GM12878 (cell line): ENCODE measurements at regions of chr11 and their contacts with region 1.

Region 1: DNA sequence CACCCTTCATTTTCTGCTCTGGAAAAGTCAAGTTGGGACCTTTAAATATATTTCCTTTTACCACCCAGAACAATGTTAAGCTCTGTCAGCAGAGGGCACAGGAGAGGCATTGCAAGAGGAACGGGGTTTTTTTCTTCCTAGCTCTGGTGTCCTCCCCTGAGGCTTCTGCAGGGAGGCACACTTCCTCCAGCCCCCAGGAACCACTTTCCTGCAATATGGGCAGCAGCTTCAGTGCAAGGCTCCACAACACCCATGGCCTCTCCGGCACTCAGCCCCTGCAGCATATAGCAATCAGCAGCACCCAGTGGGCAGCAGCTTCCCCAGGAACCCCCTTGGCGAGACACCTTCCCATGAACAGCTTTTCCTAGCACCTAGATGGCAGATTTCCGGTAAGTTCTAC is 101.4 kb downstream of the SYT9 start:
- DNase-seq: peak; percentile 7
- ATAC-seq: peak; percentile 89
- H3K4me3 ChIP-seq: no peak overlapping the region
- H3K27ac ChIP-seq: no peak overlapping the region
- H3K4me1 ChIP-seq: no peaks in the 10 kb centered on the region
- H3K27me3 ChIP-seq: no peaks in the 10 kb centered on the region
- CTCF ChIP-seq: peak; percentile 57 to 75 (median 70)
- EP300 ChIP-seq: no peak
- POLR2A ChIP-seq: no peak
- RAD21 ChIP-seq: peak; percentile 84

Region 2: DNA sequence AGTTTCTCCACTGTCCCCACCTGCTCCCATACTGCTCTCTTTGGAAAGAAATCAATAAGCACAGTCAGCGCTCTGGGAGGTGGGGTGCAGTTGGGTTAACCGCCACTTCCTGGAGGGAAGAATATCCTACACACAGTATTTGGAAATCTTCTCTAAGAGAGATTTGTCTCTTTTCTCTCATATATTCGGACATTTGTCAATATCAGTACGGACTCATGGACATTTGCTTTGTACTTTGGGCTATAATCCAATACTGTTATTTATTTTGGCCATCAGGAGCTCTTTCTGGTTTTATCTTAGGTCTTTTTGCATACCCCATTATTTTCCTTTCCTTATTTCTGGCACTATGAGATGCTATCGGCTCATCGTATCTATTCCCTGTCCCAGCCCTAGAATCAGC is 319.1 kb before region 1 on chr11:
- CTCF ChIA-PET with region 1: no interaction called
- POLR2A ChIA-PET with region 1: no interaction called
- RAD21 ChIA-PET with region 1: no interaction called
- SMC1A ChIA-PET with region 1: no interaction called
- in situ Hi-C with region 1: no loop called
- intact Hi-C with region 1: no loop called
- DNase-seq: no peak
- ATAC-seq: no peak
- H3K4me3 ChIP-seq: no peak overlapping the region
- H3K27ac ChIP-seq: no peak overlapping the region
- H3K4me1 ChIP-seq: no peaks in the 10 kb centered on the region
- H3K27me3 ChIP-seq: no peaks in the 10 kb centered on the region; a peak in 1 of 4 replicates
- CTCF ChIP-seq: no peak
- EP300 ChIP-seq: no peak
- POLR2A ChIP-seq: no peak
- RAD21 ChIP-seq: no peak

Region 3: DNA sequence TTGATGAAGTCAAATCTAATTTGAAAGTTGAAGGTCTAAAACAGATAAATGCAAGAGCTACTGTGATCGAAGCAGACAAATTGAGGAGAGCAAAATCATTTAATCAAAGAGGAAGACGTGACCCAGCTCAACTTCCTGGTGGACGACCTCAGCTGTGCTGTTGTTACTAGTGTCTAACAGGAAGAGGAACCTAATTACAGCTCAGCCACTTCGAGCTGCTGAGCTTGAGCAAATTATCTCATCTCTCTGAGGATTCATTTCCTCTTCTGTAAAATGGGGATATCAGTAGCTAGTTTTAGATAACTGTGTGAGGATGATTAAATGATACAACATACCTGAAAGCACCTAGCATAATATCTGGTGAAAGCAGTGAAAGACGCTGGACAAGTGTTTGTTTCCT is 83.6 kb after region 1 on chr11:
- CTCF ChIA-PET with region 1: interaction called, 107 read pairs
- POLR2A ChIA-PET with region 1: no interaction called
- RAD21 ChIA-PET with region 1: interaction called, 74 read pairs
- SMC1A ChIA-PET with region 1: interaction called, 119 read pairs
- in situ Hi-C with region 1: loop called (anchors 5 kb)
- intact Hi-C with region 1: no loop called
- DNase-seq: no peak
- ATAC-seq: peak; percentile 89
- H3K4me3 ChIP-seq: no peak overlapping the region
- H3K27ac ChIP-seq: no peak overlapping the region
- H3K4me1 ChIP-seq: 0 out of 2 replicates have a peak, but pooled peaks cover 5% of the 10 kb centered on the region
- H3K27me3 ChIP-seq: no peaks in the 10 kb centered on the region
- CTCF ChIP-seq: no peak
- EP300 ChIP-seq: no peak
- POLR2A ChIP-seq: no peak
- RAD21 ChIP-seq: no peak

Region 4: GRCh38 chr11:7442588-7443215 is 89.6 kb after region 1 on chr11:
- CTCF ChIA-PET with region 1: interaction called, 107 read pairs
- POLR2A ChIA-PET with region 1: no interaction called
- RAD21 ChIA-PET with region 1: interaction called, 74 read pairs
- SMC1A ChIA-PET with region 1: interaction called, 119 read pairs
- in situ Hi-C with region 1: loop called (anchors 5 kb)
- intact Hi-C with region 1: loop called (anchors 1 kb)
- DNase-seq: peak; percentile 30
- ATAC-seq: peak; percentile 98
- H3K4me3 ChIP-seq: no peak overlapping the region
- H3K27ac ChIP-seq: no peak overlapping the region
- H3K4me1 ChIP-seq: no peaks in the 10 kb centered on the region
- H3K27me3 ChIP-seq: no peaks in the 10 kb centered on the region
- CTCF ChIP-seq: peak; percentile 86 to 92 (median 90)
- EP300 ChIP-seq: no peak
- POLR2A ChIP-seq: no peak
- RAD21 ChIP-seq: peak; percentile 98

Region 5: DNA sequence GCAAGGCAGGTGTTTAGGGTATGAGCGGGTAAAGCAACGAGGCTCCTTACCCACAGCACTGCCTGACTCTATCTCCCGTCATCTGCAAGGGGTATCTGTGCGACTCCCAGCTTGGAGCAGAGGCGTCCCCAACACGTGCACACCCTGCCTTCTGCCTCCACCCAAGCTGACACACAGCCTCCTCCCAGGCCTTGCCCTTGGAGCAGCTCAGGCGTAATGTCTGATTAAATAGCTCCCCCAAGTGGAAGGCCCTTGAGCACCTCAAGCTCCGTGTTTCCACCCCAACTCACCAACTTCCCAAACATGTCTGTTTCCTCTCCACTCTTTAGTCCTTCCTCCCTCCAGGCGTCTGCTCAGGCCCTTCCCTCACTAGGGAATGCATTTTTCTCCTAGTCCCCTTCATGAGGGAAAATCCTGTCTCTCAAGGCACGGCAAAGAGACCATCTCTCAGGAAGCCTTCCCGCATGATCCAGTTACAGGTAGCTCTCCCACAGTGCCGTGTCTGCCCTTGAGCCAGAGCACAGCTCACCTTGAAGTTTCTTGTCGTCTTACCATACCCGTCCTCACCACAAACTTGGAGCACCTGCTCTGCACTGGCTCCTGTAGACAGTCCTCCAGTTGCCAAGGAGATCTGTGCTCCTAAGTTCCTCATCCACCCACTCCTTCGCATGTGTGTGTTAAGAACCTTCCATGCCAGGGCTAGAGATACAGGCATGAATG is 304.4 kb after region 1 on chr11:
- CTCF ChIA-PET with region 1: interaction called, 16 read pairs
- POLR2A ChIA-PET with region 1: no interaction called
- RAD21 ChIA-PET with region 1: interaction called, 11 read pairs
- SMC1A ChIA-PET with region 1: interaction called, 9 read pairs
- in situ Hi-C with region 1: no loop called
- intact Hi-C with region 1: no loop called
- DNase-seq: no peak
- ATAC-seq: peak; percentile 83
- H3K4me3 ChIP-seq: no peak overlapping the region
- H3K27ac ChIP-seq: no peak overlapping the region
- H3K4me1 ChIP-seq: no peaks in the 10 kb centered on the region
- H3K27me3 ChIP-seq: no peaks in the 10 kb centered on the region
- CTCF ChIP-seq: peak in 2 of 3 experiments; percentile 17 to 53; a peak in 3 of 6 replicates
- EP300 ChIP-seq: no peak
- POLR2A ChIP-seq: no peak
- RAD21 ChIP-seq: peak; percentile 51

Region 6: GRCh38 chr11:7688238-7688826 is 335.2 kb after region 1 on chr11:
- CTCF ChIA-PET with region 1: interaction called, 23 read pairs
- POLR2A ChIA-PET with region 1: no interaction called
- RAD21 ChIA-PET with region 1: interaction called, 8 read pairs
- SMC1A ChIA-PET with region 1: interaction called, 4 read pairs
- in situ Hi-C with region 1: loop called (anchors 5 kb)
- intact Hi-C with region 1: loop called (anchors 1 kb)
- DNase-seq: no peak
- ATAC-seq: peak; percentile 84
- H3K4me3 ChIP-seq: no peak overlapping the region
- H3K27ac ChIP-seq: no peak overlapping the region
- H3K4me1 ChIP-seq: no peaks in the 10 kb centered on the region
- H3K27me3 ChIP-seq: peaks cover 0 to 2% of the 10 kb centered on the region in 2 experiments; a peak in 2 of 4 replicates
- CTCF ChIP-seq: peak; percentile 76 to 80 (median 79)
- EP300 ChIP-seq: no peak
- POLR2A ChIP-seq: no peak
- RAD21 ChIP-seq: peak; percentile 80

Region 7: GRCh38 chr11:7696424-7696823 is 343.3 kb after region 1 on chr11:
- CTCF ChIA-PET with region 1: interaction called, 23 read pairs
- POLR2A ChIA-PET with region 1: no interaction called
- RAD21 ChIA-PET with region 1: interaction called, 6 read pairs
- SMC1A ChIA-PET with region 1: interaction called, 7 read pairs
- in situ Hi-C with region 1: loop called (anchors 5 kb)
- intact Hi-C with region 1: no loop called
- DNase-seq: no peak
- ATAC-seq: peak; percentile 28
- H3K4me3 ChIP-seq: no peak overlapping the region
- H3K27ac ChIP-seq: no peak overlapping the region
- H3K4me1 ChIP-seq: no peaks in the 10 kb centered on the region
- H3K27me3 ChIP-seq: peaks cover 0 to 5% of the 10 kb centered on the region in 2 experiments; a peak in 2 of 4 replicates
- CTCF ChIP-seq: no peak
- EP300 ChIP-seq: no peak
- POLR2A ChIP-seq: no peak
- RAD21 ChIP-seq: no peak